ENCODE measurements at regions of chr5 and their contacts with region 1.

Region 1: GRCh38 chr5:82278095-82278918 is at the start of gene RPS23:
- DNase-seq: peak; percentile 95
- H3K4me3 Mint-ChIP-seq: peak within 1 kb of the TSS; percentile 96
- H3K27ac Mint-ChIP-seq: peak within 1 kb of the TSS; percentile 99
- H3K4me1 Mint-ChIP-seq: peaks cover 19% of the 10 kb centered on the region
- H3K27me3 Mint-ChIP-seq: no peaks in the 10 kb centered on the region
- CTCF ChIP-seq: no peak
- total RNA-seq, gene RPS23: 2,870 and 3,151 TPM in 2 replicates

Region 2: DNA sequence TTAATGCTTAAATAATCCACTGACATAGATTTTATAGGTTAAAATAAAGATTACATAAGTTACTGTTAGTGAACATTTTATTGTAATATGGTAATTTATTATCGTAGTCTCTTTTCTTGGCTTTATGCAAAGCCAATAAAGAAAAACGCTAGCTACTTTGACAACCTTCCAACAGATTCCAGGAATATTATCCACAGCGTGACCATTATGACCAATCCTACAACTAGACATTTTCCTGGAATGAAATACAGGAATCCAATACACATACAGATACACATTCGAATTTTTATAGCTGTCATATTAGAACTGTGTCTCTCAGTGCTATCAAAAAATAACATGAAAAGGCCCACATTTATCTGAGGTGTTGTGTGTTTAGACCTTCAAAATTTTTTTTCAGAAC is 13.3 kb before region 1 on chr5:
- CTCF ChIA-PET with region 1: interaction called, 18 read pairs
- POLR2A ChIA-PET with region 1: interaction called, 16 read pairs
- intact Hi-C with region 1: no loop called
- DNase-seq: no peak
- H3K4me3 Mint-ChIP-seq: no peak overlapping the region
- H3K27ac Mint-ChIP-seq: no peak overlapping the region
- H3K4me1 Mint-ChIP-seq: no peaks in the 10 kb centered on the region
- H3K27me3 Mint-ChIP-seq: no peaks in the 10 kb centered on the region
- CTCF ChIP-seq: no peak

Region 3: DNA sequence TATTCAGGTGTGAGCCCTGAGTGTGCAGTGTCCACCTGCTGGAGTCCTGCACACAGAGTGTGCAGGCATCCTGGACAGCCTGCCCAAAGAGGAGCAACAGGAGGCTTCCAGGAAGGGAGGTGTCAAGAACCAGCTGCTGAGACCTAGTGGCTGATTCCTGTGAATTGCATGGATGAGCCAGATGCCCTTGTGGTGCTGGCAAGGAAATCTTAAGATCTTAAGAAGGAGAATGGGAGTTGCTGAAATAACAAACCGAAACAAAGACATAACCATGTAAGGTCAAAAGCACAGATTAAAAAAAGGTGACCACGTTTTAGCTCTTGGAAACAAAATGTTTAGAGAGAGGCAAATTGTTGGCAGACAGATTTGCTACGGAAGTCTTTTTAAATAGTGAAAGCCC is 29.1 kb after region 1 on chr5:
- CTCF ChIA-PET with region 1: no interaction called
- POLR2A ChIA-PET with region 1: no interaction called
- intact Hi-C with region 1: no loop called
- DNase-seq: no peak
- H3K4me3 Mint-ChIP-seq: no peak overlapping the region
- H3K27ac Mint-ChIP-seq: no peak overlapping the region
- H3K4me1 Mint-ChIP-seq: no peaks in the 10 kb centered on the region
- H3K27me3 Mint-ChIP-seq: no peaks in the 10 kb centered on the region
- CTCF ChIP-seq: no peak

Region 4: GRCh38 chr5:82459626-82460025 is 181.3 kb after region 1 on chr5:
- CTCF ChIA-PET with region 1: no interaction called
- POLR2A ChIA-PET with region 1: no interaction called
- intact Hi-C with region 1: no loop called
- DNase-seq: no peak
- H3K4me3 Mint-ChIP-seq: no peak overlapping the region
- H3K27ac Mint-ChIP-seq: no peak overlapping the region
- H3K4me1 Mint-ChIP-seq: no peaks in the 10 kb centered on the region
- H3K27me3 Mint-ChIP-seq: no peaks in the 10 kb centered on the region
- CTCF ChIP-seq: no peak

Region 5: GRCh38 chr5:82719368-82719767 is 441.1 kb after region 1 on chr5:
- CTCF ChIA-PET with region 1: no interaction called
- POLR2A ChIA-PET with region 1: no interaction called
- intact Hi-C with region 1: no loop called
- DNase-seq: no peak
- H3K4me3 Mint-ChIP-seq: no peak overlapping the region
- H3K27ac Mint-ChIP-seq: no peak overlapping the region
- H3K4me1 Mint-ChIP-seq: peaks cover 5% of the 10 kb centered on the region
- H3K27me3 Mint-ChIP-seq: no peaks in the 10 kb centered on the region
- CTCF ChIP-seq: no peak

Region 6: DNA sequence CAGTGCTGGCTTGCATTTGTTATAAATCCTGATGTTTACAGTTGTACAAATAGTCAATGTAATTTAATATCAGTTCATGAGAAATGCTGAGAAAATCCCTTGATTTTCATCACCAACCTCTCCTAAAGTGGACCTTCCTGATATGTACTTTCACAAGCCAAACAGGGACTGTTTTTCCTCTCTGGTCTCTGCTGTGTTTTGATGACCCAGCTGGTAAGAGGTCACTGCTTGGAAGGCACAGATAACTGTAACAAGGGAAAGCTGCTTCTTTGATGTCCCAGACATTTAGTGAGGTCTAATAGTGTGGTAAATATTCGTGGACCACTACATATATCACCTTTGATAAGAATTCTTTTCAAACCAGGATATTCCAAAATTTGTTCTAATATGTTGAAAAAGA is 1511.1 kb after region 1 on chr5:
- CTCF ChIA-PET with region 1: no interaction called
- POLR2A ChIA-PET with region 1: no interaction called
- intact Hi-C with region 1: no loop called
- DNase-seq: no peak
- H3K4me3 Mint-ChIP-seq: no peak overlapping the region
- H3K27ac Mint-ChIP-seq: no peak overlapping the region
- H3K4me1 Mint-ChIP-seq: no peaks in the 10 kb centered on the region
- H3K27me3 Mint-ChIP-seq: peaks cover 52% of the 10 kb centered on the region
- CTCF ChIP-seq: no peak

Measured in MCF 10A (cell line).